Cardiac septum (tissue), 1 donor: ENCODE measurements at regions of chr3 and their contacts with region 1.

Region 1: DNA sequence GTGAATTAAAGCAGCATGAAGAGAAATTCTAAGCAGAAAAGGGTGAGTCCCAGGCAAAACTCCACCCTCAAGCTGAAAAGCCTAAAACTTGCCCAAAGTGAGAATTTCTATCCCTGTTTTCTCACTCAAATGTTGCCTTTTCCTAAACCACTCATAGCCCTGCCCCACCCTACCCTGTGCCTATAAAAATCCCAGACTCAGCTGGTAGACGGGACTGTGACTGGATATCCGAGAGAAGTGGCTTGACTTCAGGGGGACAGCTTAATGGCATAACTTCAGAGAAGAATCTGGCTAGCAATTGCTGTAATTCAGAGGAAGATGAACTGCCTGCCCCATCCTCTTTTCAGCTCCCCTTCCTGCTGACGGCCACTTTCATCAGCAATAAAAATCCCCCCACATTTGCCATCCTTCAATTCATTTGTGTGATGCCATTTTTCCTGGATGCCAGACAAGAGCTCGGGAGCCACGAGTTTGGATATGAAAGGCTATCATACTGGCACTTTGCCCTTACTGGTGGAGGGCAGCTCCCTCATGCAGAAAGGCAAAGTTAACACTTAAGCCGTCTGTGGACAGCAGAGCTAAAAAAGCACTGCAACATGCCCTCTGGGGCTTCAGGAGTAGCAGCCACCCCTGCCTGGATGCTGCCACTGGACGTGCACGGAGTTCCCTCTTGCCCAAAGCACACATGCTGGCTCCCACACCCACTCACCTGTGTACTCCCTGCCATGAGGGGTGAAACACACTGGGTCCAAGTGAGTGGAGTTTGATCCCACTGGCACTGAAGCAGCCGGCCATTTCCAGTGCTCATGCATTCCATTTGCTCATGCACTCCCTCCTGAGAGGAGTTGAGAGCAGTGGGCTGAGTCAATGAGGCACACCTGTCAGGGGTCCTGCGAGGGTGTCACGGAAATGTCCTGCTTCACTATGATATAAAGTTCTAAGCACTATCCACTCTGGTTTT is 670.6 kb downstream of the PLOD2 start:
- DNase-seq: no peak

Region 2: GRCh38 chr3:145522893-145523651 is 32.7 kb after region 1 on chr3:
- intact Hi-C with region 1: loop called (anchors 2 kb)
- DNase-seq: no peak

Region 3: DNA sequence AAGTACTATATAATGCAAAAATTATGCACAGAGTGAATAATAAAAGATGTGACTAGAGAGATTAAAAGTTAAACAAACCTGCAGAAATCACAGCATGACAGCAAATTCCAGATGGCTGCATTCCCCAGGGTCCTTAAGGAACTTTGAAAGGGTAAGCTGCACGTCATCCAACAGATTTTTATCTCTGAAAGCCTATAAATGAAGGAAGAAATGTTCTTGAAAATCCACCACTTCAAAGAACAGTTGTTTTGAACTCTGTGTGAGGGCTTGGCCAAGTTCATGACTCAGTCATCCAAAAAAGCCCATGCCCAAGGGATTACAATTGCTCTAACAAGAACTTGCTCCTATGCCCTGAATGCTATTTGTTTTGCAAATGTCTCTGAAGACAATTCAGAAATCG is 67.0 kb after region 1 on chr3:
- intact Hi-C with region 1: no loop called
- DNase-seq: no peak

Region 4: GRCh38 chr3:145882436-145882835 is 392.1 kb after region 1 on chr3:
- intact Hi-C with region 1: no loop called
- DNase-seq: no peak